ENCODE measurements at regions of chr7 and their contacts with region 1.

Region 1: DNA sequence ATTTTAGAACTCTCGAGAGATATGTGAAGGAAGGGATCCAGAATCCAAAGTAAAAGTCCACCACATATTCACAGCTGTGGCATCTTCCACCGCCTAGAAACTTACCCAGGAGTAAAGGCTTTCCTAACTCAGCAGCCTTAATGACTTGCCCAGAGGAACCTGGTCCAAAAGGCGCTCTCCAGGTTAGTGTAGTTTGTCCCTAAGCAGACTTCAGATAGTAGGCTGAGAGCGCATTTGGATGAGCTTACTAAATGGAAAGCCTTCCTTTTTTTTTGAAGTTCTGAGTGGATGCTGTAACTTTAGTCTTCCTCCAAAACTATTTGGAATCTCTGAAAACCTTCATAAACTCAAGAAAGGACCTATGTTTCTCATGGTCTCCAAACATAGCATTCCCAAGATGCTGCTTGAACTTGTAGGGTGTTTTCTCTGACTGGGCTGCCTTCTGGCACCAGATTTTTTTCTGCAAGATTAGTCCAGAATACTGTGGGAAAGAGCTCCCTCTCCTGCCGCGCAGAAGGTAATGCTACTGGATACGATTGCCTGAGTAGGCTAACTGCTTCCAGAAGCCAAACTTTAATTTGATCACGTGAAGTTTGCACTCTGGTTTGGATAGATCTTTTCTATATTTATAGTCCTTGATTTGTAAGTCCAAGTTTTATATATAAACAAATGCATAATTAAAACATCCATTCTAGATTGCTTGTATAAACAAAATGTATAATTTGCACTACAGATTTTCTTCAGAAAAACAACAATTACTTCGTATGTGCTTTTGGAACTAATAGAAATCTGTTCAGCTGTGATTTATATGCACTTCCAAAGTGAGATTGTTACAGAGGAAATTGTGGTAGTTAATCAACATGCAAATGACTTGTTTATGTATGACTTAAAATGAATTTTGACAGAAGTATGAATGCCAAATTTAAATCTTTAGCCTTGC is 19.6 kb upstream of the GPR37 start:
- DNase-seq: peak; percentile 40
- H3K4me3 ChIP-seq: no peak overlapping the region
- H3K27ac ChIP-seq: no peak overlapping the region
- H3K4me1 ChIP-seq: no peaks in the 10 kb centered on the region
- H3K27me3 ChIP-seq: no peaks in the 10 kb centered on the region
- CTCF ChIP-seq: peak in 3 of 4 experiments; percentile 51 to 71 (median 61)
- POLR2A ChIP-seq: no peak

Region 2: GRCh38 chr7:124162667-124163066 is 622.5 kb before region 1 on chr7:
- intact Hi-C with region 1: loop called (anchors 10 kb)
- DNase-seq: no peak
- H3K4me3 ChIP-seq: no peak overlapping the region
- H3K27ac ChIP-seq: no peak overlapping the region
- H3K4me1 ChIP-seq: no peaks in the 10 kb centered on the region
- H3K27me3 ChIP-seq: no peaks in the 10 kb centered on the region
- CTCF ChIP-seq: no peak
- POLR2A ChIP-seq: no peak

Measured in prostate gland (tissue), 2 donors.